ENCODE measurements at regions of chr1 and their contacts with region 1.

Region 1: GRCh38 chr1:241611063-241611462 is 29.1 kb downstream of the CHML start:
- DNase-seq: no peak
- ATAC-seq: peak; percentile 83

Region 2: DNA sequence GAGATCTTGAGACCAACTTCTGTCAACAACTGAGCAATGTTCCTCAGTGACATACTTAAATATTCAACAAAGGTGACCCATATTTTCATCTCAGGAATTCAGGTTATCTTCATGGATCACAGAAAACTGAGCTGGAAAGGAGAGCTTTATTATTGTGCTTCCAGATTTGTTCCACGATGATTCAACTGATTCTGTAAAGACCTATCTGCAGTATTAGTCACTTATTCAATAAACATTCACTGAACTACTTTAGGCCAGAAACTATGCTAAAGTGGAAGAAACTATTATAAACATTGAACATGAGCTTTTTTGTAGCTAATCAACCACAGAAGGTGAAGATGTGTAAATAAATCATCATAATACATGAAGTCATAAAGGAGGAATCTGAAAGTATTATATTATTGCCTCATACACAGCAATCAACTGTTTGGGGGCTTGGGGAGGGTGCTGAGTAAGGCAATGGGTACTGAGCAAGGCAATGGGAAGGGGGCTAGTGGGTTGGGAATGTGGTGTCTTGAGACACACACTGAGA is 206.3 kb after region 1 on chr1:
- intact Hi-C with region 1: no loop called
- DNase-seq: no peak
- ATAC-seq: no peak

Region 3: GRCh38 chr1:241847796-241848685 is 237.0 kb after region 1 on chr1 and contains the start of gene EXO1:
- intact Hi-C with region 1: loop called (anchors 5 kb)
- DNase-seq: peak; percentile 94
- ATAC-seq: peak; percentile 98
- total RNA-seq, gene EXO1: 0.65 TPM

Region 4: DNA sequence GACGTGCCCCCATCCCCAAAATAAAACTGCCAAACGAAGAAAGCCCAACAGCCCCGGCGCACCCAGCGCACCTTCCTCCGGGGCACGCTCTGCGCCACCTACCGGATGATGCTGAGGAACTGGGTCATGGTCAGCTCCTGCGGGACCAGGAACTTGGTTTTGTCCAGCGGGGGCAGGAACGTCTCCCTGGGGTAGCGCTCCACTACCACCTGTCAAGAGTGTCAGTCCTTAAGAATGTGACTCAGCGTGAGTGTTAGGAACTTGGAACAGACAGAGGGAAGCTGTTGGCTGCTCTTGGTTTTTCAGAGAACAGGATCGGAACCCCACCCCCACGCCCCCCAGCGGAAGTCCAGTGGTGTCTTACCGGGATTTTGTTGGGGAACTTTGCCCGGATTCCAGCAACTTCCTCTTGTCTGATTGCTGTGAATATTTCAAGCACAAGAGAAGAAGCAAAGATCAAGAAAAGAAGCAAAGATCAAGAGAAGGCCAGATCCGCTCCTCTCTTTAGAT is 387.4 kb after region 1 on chr1:
- intact Hi-C with region 1: loop called (anchors 10 kb)
- DNase-seq: peak; percentile 79
- ATAC-seq: peak; percentile 88

Measured in Right ventricle myocardium inferior (tissue), 1 donor.